ENCODE measurements at regions of chr3 and their contacts with region 1.

Region 1: GRCh38 chr3:192188218-192188835 is 539.0 kb downstream of the FGF12 start:
- DNase-seq: no peak
- ATAC-seq: peak; percentile 95
- H3K4me3 ChIP-seq: no peak overlapping the region
- H3K27ac ChIP-seq: no peak overlapping the region
- H3K4me1 ChIP-seq: no peaks in the 10 kb centered on the region
- H3K27me3 ChIP-seq: no peaks in the 10 kb centered on the region
- CTCF ChIP-seq: peak; percentile 70 to 79 (median 78)
- EP300 ChIP-seq: no peak
- POLR2A ChIP-seq: no peak
- RAD21 ChIP-seq: peak; percentile 62

Region 2: GRCh38 chr3:192038726-192039125 is 149.6 kb before region 1 on chr3:
- CTCF ChIA-PET with region 1: no interaction called
- POLR2A ChIA-PET with region 1: no interaction called
- RAD21 ChIA-PET with region 1: no interaction called
- SMC1A ChIA-PET with region 1: no interaction called
- in situ Hi-C with region 1: no loop called
- intact Hi-C with region 1: no loop called
- DNase-seq: no peak
- ATAC-seq: no peak
- H3K4me3 ChIP-seq: no peak overlapping the region
- H3K27ac ChIP-seq: no peak overlapping the region
- H3K4me1 ChIP-seq: peaks cover 11% of the 10 kb centered on the region; the same call in 1 of the 2 replicates
- H3K27me3 ChIP-seq: no peaks in the 10 kb centered on the region
- CTCF ChIP-seq: no peak
- EP300 ChIP-seq: no peak
- POLR2A ChIP-seq: no peak
- RAD21 ChIP-seq: no peak

Region 3: GRCh38 chr3:192063570-192063969 is 124.8 kb before region 1 on chr3:
- CTCF ChIA-PET with region 1: no interaction called
- POLR2A ChIA-PET with region 1: no interaction called
- RAD21 ChIA-PET with region 1: no interaction called
- SMC1A ChIA-PET with region 1: no interaction called
- in situ Hi-C with region 1: no loop called
- intact Hi-C with region 1: no loop called
- DNase-seq: peak; percentile 45
- ATAC-seq: peak; percentile 94
- H3K4me3 ChIP-seq: no peak overlapping the region
- H3K27ac ChIP-seq: peak overlapping the region; percentile 20; the same call in 1 of the 2 replicates
- H3K4me1 ChIP-seq: peaks cover 17% of the 10 kb centered on the region
- H3K27me3 ChIP-seq: no peaks in the 10 kb centered on the region
- CTCF ChIP-seq: no peak
- EP300 ChIP-seq: no peak
- POLR2A ChIP-seq: no peak
- RAD21 ChIP-seq: no peak

Region 4: GRCh38 chr3:192212335-192212734 is 24.0 kb after region 1 on chr3:
- CTCF ChIA-PET with region 1: interaction called, 24 read pairs
- POLR2A ChIA-PET with region 1: no interaction called
- RAD21 ChIA-PET with region 1: no interaction called
- SMC1A ChIA-PET with region 1: no interaction called
- in situ Hi-C with region 1: no loop called
- intact Hi-C with region 1: no loop called
- DNase-seq: no peak
- ATAC-seq: peak; percentile 47; the same call in 1 of the 3 replicates
- H3K4me3 ChIP-seq: no peak overlapping the region
- H3K27ac ChIP-seq: no peak overlapping the region
- H3K4me1 ChIP-seq: no peaks in the 10 kb centered on the region
- H3K27me3 ChIP-seq: no peaks in the 10 kb centered on the region
- CTCF ChIP-seq: peak; percentile 17 to 42 (median 40); a peak in 5 of 6 replicates
- EP300 ChIP-seq: no peak
- POLR2A ChIP-seq: no peak
- RAD21 ChIP-seq: peak; percentile 32; the same call in 1 of the 2 replicates

Region 5: DNA sequence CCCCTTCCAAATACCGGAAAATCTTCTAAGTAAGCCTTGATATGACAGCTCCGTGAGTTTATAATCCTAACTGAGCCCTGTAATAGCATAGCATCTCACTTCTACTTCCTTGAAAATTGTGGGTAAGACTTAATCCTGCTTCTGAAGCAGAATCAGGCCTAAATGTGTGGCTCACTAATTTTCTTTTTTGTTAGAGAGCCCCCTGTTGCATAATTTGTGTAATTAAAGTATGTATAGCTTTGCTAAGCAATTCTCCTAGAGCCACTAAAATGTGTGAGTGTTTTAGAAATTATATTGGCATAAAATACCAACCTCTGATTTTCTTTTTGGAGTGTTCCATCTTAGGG is 234.6 kb after region 1 on chr3:
- CTCF ChIA-PET with region 1: interaction called, 30 read pairs
- POLR2A ChIA-PET with region 1: no interaction called
- RAD21 ChIA-PET with region 1: interaction called, 10 read pairs
- SMC1A ChIA-PET with region 1: interaction called, 8 read pairs
- in situ Hi-C with region 1: loop called (anchors 25 kb)
- intact Hi-C with region 1: loop called (anchors 2 kb)
- DNase-seq: no peak
- ATAC-seq: peak; percentile 52; the same call in 2 of the 3 replicates
- H3K4me3 ChIP-seq: no peak overlapping the region
- H3K27ac ChIP-seq: no peak overlapping the region
- H3K4me1 ChIP-seq: no peaks in the 10 kb centered on the region
- H3K27me3 ChIP-seq: no peaks in the 10 kb centered on the region
- CTCF ChIP-seq: peak; percentile 16 to 44 (median 19); a peak in 2 of 6 replicates
- EP300 ChIP-seq: no peak
- POLR2A ChIP-seq: no peak
- RAD21 ChIP-seq: peak; percentile 37; the same call in 1 of the 2 replicates

Region 6: GRCh38 chr3:193240850-193241706 is 1052.8 kb after region 1 on chr3 and contains the start of gene PLAAT1:
- CTCF ChIA-PET with region 1: no interaction called
- POLR2A ChIA-PET with region 1: no interaction called
- RAD21 ChIA-PET with region 1: no interaction called
- SMC1A ChIA-PET with region 1: no interaction called
- in situ Hi-C with region 1: no loop called
- intact Hi-C with region 1: no loop called
- DNase-seq: no peak
- ATAC-seq: no peak
- H3K4me3 ChIP-seq: no peak within 1 kb of the TSS
- H3K27ac ChIP-seq: no peak within 1 kb of the TSS
- H3K4me1 ChIP-seq: no peaks in the 10 kb centered on the region
- H3K27me3 ChIP-seq: peaks cover 2% of the 10 kb centered on the region in 2 experiments; a peak in 3 of 4 replicates
- CTCF ChIP-seq: no peak
- EP300 ChIP-seq: no peak
- POLR2A ChIP-seq: no peak
- RAD21 ChIP-seq: no peak
- polyA plus RNA-seq, gene PLAAT1: not detected

Measured in GM12878 (cell line).